ENCODE measurements at regions of chr7 and their contacts with region 1.

Region 1: GRCh38 chr7:35801392-35802101 is 690 bp downstream of the SEPTIN7 start:
- DNase-seq: peak; percentile 76
- H3K4me3 ChIP-seq: peak overlapping the region; percentile 82 to 98 (median 88)
- H3K27ac ChIP-seq: peak overlapping the region; percentile 98 to 100 (median 98)
- H3K4me1 ChIP-seq: peaks cover 12 to 50% (median 34%) of the 10 kb centered on the region in 4 donors
- H3K27me3 ChIP-seq: no peaks in the 10 kb centered on the region
- CTCF ChIP-seq: peak in 4 of 5 experiments; percentile 42 to 58 (median 48)
- EP300 ChIP-seq: no peak
- POLR2A ChIP-seq: no peak

Region 2: GRCh38 chr7:35185907-35186731 is 615.4 kb before region 1 on chr7:
- in situ Hi-C with region 1: no loop called
- intact Hi-C with region 1: no loop called
- DNase-seq: no peak
- H3K4me3 ChIP-seq: peak overlapping the region in 2 of 4 donors; percentile 20 to 48
- H3K27ac ChIP-seq: no peak overlapping the region
- H3K4me1 ChIP-seq: peaks cover 0 to 13% (median 7%) of the 10 kb centered on the region in 4 donors
- H3K27me3 ChIP-seq: peaks cover 30% of the 10 kb centered on the region
- CTCF ChIP-seq: no peak
- EP300 ChIP-seq: no peak
- POLR2A ChIP-seq: no peak

Region 3: GRCh38 chr7:35831208-35831607 is 29.7 kb after region 1 on chr7:
- in situ Hi-C with region 1: no loop called
- intact Hi-C with region 1: loop called (anchors 1 kb)
- DNase-seq: no peak
- H3K4me3 ChIP-seq: no peak overlapping the region
- H3K27ac ChIP-seq: peak overlapping the region in 1 of 4 donors; percentile 4
- H3K4me1 ChIP-seq: peaks cover 0 to 22% (median 7%) of the 10 kb centered on the region in 4 donors
- H3K27me3 ChIP-seq: no peaks in the 10 kb centered on the region
- CTCF ChIP-seq: no peak
- EP300 ChIP-seq: no peak
- POLR2A ChIP-seq: no peak

Region 4: DNA sequence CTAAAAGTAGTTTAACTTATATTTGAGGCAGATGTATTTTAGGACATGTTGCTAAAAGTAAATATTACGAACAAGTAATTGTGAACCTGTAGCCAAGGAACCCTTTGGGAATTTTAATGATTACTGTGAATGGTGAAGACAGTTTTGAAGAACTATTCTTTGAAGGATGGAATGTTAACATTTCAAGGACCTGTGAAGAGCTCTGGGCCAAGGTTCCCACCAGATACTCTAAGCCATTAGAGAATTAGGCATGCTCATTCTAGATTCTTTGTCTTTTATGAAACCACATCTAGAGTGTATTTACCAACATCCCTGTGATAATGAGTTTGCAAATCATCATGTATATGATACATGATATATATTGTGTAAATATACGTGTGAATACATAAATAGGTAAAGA is 99.1 kb after region 1 on chr7:
- in situ Hi-C with region 1: no loop called
- intact Hi-C with region 1: loop called (anchors 5 kb)
- DNase-seq: no peak
- H3K4me3 ChIP-seq: no peak overlapping the region
- H3K27ac ChIP-seq: no peak overlapping the region
- H3K4me1 ChIP-seq: no peaks in the 10 kb centered on the region
- H3K27me3 ChIP-seq: no peaks in the 10 kb centered on the region
- CTCF ChIP-seq: no peak
- EP300 ChIP-seq: no peak
- POLR2A ChIP-seq: no peak